Panc1 (cell line): ENCODE measurements at regions of chr6 and their contacts with region 1.

Region 1: GRCh38 chr6:108113557-108114519 is 39.3 kb upstream of the OSTM1 start:
- DNase-seq: no peak
- ATAC-seq: peak; percentile 58
- H3K4me3 ChIP-seq: peak overlapping the region; percentile 17 to 46; a peak in 3 of 4 replicates
- H3K27ac ChIP-seq: no peak overlapping the region
- H3K4me1 ChIP-seq: peaks cover 16% of the 10 kb centered on the region
- H3K27me3 ChIP-seq: peaks cover 16% of the 10 kb centered on the region
- CTCF ChIP-seq: peak; percentile 78

Region 2: DNA sequence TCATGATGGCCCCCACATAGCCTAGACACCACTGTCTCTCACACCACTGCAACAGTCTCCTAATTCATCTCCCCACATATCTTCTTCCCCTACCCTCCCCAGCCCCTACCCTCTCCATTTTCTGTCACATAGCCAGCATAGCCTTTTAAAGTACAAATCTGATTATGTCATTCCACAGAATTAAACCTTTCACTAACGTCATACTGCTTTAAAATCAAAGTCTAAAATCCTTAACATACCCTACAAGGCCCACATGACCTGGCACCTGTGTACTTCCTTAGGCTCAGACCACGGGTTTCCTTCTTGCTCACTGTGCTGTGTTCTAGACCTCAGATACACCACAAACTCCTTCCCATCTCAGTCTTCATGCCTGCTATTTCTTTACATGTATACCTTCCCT is 45.2 kb before region 1 on chr6:
- CTCF ChIA-PET with region 1: no interaction called
- POLR2A ChIA-PET with region 1: no interaction called
- in situ Hi-C with region 1: no loop called
- intact Hi-C with region 1: no loop called
- DNase-seq: no peak
- ATAC-seq: no peak
- H3K4me3 ChIP-seq: no peak overlapping the region
- H3K27ac ChIP-seq: no peak overlapping the region
- H3K4me1 ChIP-seq: peaks cover 6% of the 10 kb centered on the region
- H3K27me3 ChIP-seq: no peaks in the 10 kb centered on the region
- CTCF ChIP-seq: no peak

Region 3: GRCh38 chr6:108235127-108235526 is 121.3 kb after region 1 on chr6:
- CTCF ChIA-PET with region 1: no interaction called
- POLR2A ChIA-PET with region 1: no interaction called
- in situ Hi-C with region 1: no loop called
- intact Hi-C with region 1: loop called (anchors 10 kb)
- DNase-seq: no peak
- ATAC-seq: no peak
- H3K4me3 ChIP-seq: no peak overlapping the region
- H3K27ac ChIP-seq: no peak overlapping the region
- H3K4me1 ChIP-seq: no peaks in the 10 kb centered on the region
- H3K27me3 ChIP-seq: no peaks in the 10 kb centered on the region
- CTCF ChIP-seq: no peak

Region 4: DNA sequence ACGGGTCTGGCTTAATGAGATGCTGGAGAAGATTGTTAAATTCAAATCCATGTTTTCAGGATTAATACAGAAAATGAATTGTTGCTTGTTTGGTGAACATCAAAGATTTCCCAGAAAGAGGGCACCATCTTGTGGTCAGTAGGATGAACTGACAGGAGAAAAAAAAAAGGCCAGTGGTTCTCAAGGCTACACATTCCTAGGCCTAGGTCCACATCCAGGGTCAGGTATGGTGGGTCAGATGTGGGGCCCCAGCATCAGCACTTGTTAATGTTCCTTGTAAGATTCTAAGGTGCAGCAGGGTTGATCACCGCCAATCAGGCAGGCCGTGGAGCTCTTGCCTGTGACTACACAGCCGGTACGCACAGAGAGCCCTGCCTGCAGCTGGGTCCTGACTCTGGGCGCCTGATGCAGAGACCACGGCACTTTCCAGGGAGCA is 412.9 kb after region 1 on chr6:
- CTCF ChIA-PET with region 1: no interaction called
- POLR2A ChIA-PET with region 1: no interaction called
- in situ Hi-C with region 1: no loop called
- intact Hi-C with region 1: loop called (anchors 2 kb)
- DNase-seq: peak; percentile 42
- ATAC-seq: peak; percentile 69
- H3K4me3 ChIP-seq: no peak overlapping the region
- H3K27ac ChIP-seq: no peak overlapping the region
- H3K4me1 ChIP-seq: no peaks in the 10 kb centered on the region
- H3K27me3 ChIP-seq: no peaks in the 10 kb centered on the region
- CTCF ChIP-seq: peak; percentile 94